GM10248 (cell line): ENCODE measurements at regions of chr5 and their contacts with region 1.

Region 1: DNA sequence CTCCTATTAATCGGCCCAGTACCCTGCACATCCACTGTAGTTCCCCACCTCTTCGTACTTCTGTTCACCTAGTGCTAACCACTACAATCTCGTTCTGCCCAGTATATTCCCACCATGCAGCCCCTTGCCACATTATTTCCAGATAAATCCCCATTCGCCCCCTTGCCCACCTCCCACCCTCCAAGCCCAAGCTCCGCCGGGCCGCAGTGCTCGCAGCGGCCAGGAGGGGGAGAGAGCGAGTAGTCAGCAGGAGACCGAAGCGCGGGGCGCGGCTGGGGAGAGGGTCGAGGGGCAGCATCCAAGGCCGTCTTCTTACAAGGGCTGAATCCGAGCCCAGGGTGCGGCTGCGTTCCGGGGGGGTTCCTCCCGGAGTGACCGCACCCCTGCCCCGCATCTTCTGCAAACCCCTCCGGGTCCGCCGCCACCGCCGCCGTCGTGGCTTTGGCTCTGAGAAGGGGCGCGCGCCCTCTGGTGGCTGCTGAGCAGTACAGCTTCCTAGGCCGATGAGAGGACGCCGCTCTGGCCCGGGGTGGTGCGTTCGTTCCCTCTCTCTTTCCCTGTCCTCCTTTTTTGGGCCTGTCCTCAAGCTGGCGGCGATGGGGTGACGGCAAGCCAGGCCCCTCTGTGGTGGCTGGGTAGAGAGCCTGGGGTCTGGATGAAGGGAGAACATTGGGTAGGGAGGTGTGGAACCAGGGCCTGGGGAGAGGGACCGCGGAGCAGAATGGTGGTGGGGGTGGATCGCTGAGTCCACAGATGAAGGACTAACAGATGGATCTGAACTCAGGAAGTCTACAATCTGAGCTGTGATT is 30.0 kb upstream of the PSD2 start:
- DNase-seq: peak; percentile 87
- CTCF ChIP-seq: peak; percentile 95

Region 2: GRCh38 chr5:139642891-139643871 is 122.4 kb before region 1 on chr5:
- CTCF ChIA-PET with region 1: interaction called, 439 read pairs
- POLR2A ChIA-PET with region 1: no interaction called
- DNase-seq: no peak
- CTCF ChIP-seq: no peak

Region 3: GRCh38 chr5:139670369-139671095 is 95.1 kb before region 1 on chr5:
- CTCF ChIA-PET with region 1: interaction called, 23 read pairs
- POLR2A ChIA-PET with region 1: no interaction called
- DNase-seq: peak; percentile 74
- CTCF ChIP-seq: peak; percentile 45

Region 4: GRCh38 chr5:139711067-139711905 is 54.3 kb before region 1 on chr5:
- CTCF ChIA-PET with region 1: interaction called, 31 read pairs
- POLR2A ChIA-PET with region 1: no interaction called
- DNase-seq: peak; percentile 70
- CTCF ChIP-seq: peak; percentile 37

Region 5: DNA sequence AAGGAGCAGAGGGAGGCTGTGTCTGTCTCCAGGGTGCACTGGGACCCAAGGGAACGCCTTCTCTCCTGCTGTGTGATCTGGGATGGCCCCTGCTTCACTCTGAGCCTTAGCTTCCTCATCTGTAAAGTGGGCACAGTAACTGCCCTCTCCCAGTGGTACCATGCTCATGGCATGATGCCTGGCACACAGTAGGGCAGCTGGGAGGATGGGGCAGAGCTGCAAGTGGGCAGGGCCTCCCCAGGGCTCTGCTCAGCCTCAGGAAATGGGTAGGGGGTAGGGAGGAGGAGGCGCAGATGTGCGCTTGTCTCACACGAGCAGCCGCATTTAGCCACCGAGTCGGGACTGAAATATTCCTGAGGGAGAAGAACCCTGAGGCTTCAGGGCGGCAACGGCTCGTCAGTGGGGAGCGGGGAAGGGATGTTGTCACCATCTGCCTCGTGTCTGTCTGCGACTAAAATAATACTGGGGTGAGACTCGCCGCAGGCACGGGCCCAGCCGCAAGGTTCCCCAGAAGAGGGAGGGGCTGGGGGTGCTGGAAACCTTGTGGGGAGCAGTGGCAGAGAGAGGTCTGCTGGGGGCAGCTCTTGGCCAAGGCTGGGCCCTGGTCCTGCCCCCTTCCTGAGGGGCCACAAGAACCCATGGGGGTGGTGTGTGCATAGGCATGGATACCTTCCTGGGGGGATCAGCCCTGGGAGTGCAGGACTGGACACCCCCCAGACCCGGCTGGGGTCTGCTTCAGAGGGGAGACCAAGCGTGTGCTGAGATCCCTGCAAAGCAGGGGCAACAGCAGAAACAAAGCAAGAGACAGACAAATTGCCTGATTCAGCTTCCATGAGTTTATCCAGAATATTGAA is 25.2 kb before region 1 on chr5:
- CTCF ChIA-PET with region 1: interaction called, 150 read pairs
- POLR2A ChIA-PET with region 1: interaction called, 4 read pairs
- DNase-seq: peak; percentile 60
- CTCF ChIP-seq: no peak